Naive thymus-derived CD8-positive, alpha-beta T cell (primary cell): ENCODE measurements at regions of chr1 and their contacts with region 1.

Region 1: DNA sequence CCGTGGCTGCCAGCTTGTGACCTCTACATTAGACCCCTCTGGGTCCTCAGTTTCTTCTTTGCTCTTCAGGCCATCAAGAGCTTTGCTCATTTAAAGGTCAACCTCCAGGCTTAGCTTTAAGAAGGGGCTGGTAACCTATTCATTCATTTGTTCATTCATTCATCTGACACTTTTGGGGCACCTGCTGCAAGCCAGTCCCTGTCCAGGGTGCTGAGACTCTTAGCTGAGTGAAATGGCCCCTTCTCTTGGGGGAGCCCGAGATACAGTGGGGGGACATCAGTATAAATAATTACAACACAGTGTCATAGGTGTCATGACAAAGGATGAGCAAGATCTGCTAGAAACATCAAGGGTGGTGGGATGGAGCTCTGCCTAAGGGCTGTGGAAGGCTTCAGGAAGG is 10.5 kb upstream of the TTC4 start:
- DNase-seq: no peak
- ATAC-seq: no peak
- H3K4me3 Mint-ChIP-seq: no peak overlapping the region
- H3K27ac Mint-ChIP-seq: no peak overlapping the region
- H3K4me1 Mint-ChIP-seq: no peaks in the 10 kb centered on the region
- H3K27me3 Mint-ChIP-seq: peaks cover 8 to 26% (median 12%) of the 10 kb centered on the region in 5 donors

Region 2: GRCh38 chr1:54715493-54716298 is 10.5 kb after region 1 on chr1 and contains the start of gene TTC4:
- POLR2A ChIA-PET with region 1: interaction called, 10 read pairs
- DNase-seq: peak; percentile 68 to 89 (median 84)
- ATAC-seq: peak; percentile 96 to 97
- H3K4me3 Mint-ChIP-seq: peak within 1 kb of the TSS; percentile 75 to 96 (median 88)
- H3K27ac Mint-ChIP-seq: peak within 1 kb of the TSS; percentile 11 to 95 (median 90)
- H3K4me1 Mint-ChIP-seq: peaks cover 15 to 42% (median 38%) of the 10 kb centered on the region in 4 donors
- H3K27me3 Mint-ChIP-seq: no peaks in the 10 kb centered on the region
- polyA plus RNA-seq, gene TTC4: 18.7 to 23.2 (median 22.6) TPM

Region 3: GRCh38 chr1:54800899-54801759 is 96.0 kb after region 1 on chr1 and contains the start of gene TTC22:
- POLR2A ChIA-PET with region 1: no interaction called
- DNase-seq: peak; percentile 44 to 82 (median 63)
- ATAC-seq: peak; percentile 88 to 90
- H3K4me3 Mint-ChIP-seq: peak within 1 kb of the TSS; percentile 88 to 98 (median 95)
- H3K27ac Mint-ChIP-seq: peak within 1 kb of the TSS; percentile 80 to 97 (median 92)
- H3K4me1 Mint-ChIP-seq: peaks cover 33 to 63% (median 50%) of the 10 kb centered on the region in 4 donors
- H3K27me3 Mint-ChIP-seq: no peaks in the 10 kb centered on the region
- polyA plus RNA-seq, gene TTC22: 1.7 to 3.2 (median 2.9) TPM